ENCODE measurements at regions of chr6 and their contacts with region 1.

Region 1: GRCh38 chr6:39173270-39173669 is 56.0 kb downstream of the KCNK5 start:
- DNase-seq: no peak
- ATAC-seq: no peak
- H3K4me3 ChIP-seq: no peak overlapping the region
- H3K27ac ChIP-seq: no peak overlapping the region
- H3K4me1 ChIP-seq: peaks cover 4% of the 10 kb centered on the region; the same call in 2 of the 3 replicates
- CTCF ChIP-seq: no peak
- EP300 ChIP-seq: no peak
- POLR2A ChIP-seq: no peak
- RAD21 ChIP-seq: no peak

Region 2: GRCh38 chr6:39189915-39190544 is 16.8 kb after region 1 on chr6:
- CTCF ChIA-PET with region 1: interaction called, 14 read pairs
- POLR2A ChIA-PET with region 1: no interaction called
- DNase-seq: peak; percentile 36 to 49
- ATAC-seq: peak; percentile 95 to 98
- H3K4me3 ChIP-seq: no peak overlapping the region
- H3K27ac ChIP-seq: 0 out of 6 replicates have a peak overlapping the region, but pooled peaks of 1 of the 2 experiments have one; percentile 38
- H3K4me1 ChIP-seq: peaks cover 25% of the 10 kb centered on the region
- CTCF ChIP-seq: no peak; the same call in 2 of the 3 replicates
- EP300 ChIP-seq: no peak
- POLR2A ChIP-seq: no peak
- RAD21 ChIP-seq: peak; percentile 37 to 47; a peak in 4 of 5 replicates